Psoas muscle (tissue), 8 donors: ENCODE measurements at regions of chr3 and their contacts with region 1.

Region 1: GRCh38 chr3:172153335-172153861 is 114.0 kb downstream of the FNDC3B start:
- DNase-seq: peak; percentile 90 to 94
- ATAC-seq: peak; percentile 94 to 97 (median 96)
- H3K4me3 ChIP-seq: peak overlapping the region; percentile 45
- H3K27ac ChIP-seq: peak overlapping the region; percentile 91
- H3K4me1 ChIP-seq: peaks cover 78% of the 10 kb centered on the region
- H3K27me3 ChIP-seq: no peaks in the 10 kb centered on the region
- CTCF ChIP-seq: no peak

Region 2: DNA sequence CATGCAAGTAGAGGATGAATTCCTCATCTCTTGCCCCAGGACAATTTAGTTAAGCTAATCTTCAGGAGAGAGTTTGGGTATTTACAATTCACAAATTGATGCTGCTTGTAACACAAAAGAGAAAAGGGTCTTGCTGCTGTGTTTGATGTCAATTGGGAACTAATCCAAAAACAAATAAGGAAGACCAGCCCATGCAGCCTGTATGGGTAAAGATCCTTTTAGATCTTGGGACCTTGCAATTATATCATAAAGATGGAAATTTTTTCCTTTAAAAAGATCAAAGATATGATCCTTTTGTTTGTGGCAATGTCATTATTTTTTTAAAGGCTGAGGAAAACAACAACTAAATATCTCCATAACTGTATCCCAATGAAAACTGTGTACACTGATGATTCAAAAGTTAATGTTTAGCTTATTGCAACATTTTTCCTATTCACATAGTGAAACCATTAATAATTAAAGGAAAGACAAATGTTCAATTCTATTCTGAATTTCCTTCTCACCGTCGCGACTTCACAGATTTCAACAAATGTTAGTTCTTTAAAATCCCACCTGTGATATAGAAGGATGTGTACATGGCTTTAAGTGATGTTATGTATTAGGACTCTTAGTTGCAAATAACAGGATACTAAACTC is 270.0 kb before region 1 on chr3:
- intact Hi-C with region 1: no loop called
- DNase-seq: no peak
- ATAC-seq: no peak
- H3K4me3 ChIP-seq: no peak overlapping the region
- H3K27ac ChIP-seq: no peak overlapping the region
- H3K4me1 ChIP-seq: no peaks in the 10 kb centered on the region
- H3K27me3 ChIP-seq: no peaks in the 10 kb centered on the region
- CTCF ChIP-seq: no peak

Region 3: DNA sequence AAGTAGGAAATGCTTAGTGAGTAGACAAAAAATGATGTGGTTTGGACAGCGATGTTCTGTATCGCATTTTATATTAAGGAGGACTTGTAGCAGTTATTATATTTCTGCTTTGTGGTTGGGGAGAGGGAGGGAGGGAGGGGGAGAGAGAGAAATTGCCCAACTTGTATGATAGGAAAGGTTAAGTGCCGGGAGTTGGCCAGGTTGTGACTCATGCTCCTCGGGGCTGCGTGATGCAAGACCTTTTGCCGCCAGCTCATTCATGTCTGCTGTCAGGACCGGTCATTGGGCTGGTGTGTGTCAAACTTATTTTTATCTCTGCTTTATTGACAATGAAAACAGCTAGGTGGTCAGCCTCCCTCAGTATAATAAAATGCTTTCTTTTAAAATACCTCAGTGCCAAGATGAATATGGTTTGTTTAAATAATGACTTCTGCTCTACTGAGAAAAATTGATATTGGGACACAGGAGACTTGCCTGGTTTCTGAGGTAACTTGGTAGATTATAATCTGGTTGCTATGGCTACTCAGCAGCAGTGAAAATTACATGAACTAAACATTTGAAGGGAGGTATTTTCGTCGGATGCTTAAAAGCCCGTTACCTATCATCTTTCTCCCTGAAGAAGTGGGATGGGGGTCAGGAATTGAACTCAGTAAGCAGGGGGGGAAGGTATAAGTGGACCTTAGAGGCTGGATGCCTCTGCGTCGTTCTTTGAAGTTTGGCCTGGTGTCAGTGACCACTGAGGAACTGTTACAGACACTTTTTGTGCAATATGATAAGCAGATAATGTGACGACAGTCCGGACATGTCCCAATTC is 23.3 kb before region 1 on chr3:
- intact Hi-C with region 1: loop called in 1 of 2 experiments (anchors 2 kb)
- DNase-seq: peak; percentile 94 to 96
- ATAC-seq: peak; percentile 87 to 93 (median 89)
- H3K4me3 ChIP-seq: peak overlapping the region; percentile 33
- H3K27ac ChIP-seq: peak overlapping the region; percentile 95
- H3K4me1 ChIP-seq: peaks cover 91% of the 10 kb centered on the region
- H3K27me3 ChIP-seq: no peaks in the 10 kb centered on the region
- CTCF ChIP-seq: no peak

Region 4: DNA sequence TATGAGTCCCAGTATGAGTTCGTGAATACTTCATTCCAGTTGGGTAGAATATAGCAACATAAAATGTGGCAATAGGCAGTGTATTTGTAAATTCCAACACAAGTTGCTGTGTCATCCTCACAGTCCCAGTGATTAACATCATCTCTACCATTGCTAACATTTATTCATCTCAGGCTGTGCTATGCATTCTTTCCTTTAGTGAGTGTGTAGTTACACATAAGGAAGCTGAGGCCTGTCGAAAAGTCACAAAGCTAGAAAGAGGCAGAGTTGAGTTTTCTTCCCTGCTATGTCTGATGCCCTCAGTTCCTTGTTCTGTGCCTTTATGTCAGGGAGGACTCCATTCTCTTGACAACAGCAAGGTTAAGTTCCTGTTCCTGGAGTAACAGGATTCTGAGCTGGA is 17.6 kb before region 1 on chr3:
- intact Hi-C with region 1: loop called in 1 of 2 experiments (anchors 2 kb)
- DNase-seq: no peak
- ATAC-seq: no peak
- H3K4me3 ChIP-seq: no peak overlapping the region
- H3K27ac ChIP-seq: peak overlapping the region; percentile 79
- H3K4me1 ChIP-seq: peaks cover 87% of the 10 kb centered on the region
- H3K27me3 ChIP-seq: no peaks in the 10 kb centered on the region
- CTCF ChIP-seq: no peak

Region 5: DNA sequence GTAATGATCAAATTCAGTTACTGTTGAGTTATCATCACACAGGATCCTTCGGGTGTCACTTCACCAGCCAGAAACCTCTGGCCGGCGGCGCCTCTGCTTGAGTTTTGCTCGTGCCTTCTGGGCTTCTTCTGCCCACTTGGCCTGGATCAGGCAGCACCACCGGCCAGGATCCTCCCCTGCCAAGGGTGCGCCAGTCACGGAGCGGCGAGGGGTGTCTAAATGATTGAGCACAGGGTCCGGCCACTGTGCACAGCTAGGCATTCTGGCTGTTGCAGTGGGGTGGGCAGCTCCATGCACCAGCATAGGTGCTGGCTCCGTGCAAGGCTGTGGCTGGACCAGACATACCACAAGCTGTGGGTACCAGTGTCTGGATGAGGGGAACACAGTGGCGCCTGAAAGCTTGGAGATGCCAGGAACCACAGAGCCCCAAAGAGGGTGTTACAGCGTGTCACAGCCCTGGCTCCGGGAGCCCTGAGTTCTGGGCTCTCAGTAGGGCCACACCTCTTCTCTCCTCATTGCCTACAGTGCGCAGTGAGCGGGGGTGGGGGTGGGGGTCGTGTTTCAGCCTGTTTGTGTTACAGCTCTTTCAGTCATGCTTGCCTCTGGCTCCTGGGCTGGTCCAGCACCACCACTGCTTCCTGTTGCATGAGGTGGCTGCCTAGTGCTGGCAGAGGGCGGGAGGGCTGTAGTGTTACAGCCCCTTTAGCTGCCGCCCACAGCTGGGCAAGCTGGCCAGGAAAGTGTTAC is 55.4 kb after region 1 on chr3:
- intact Hi-C with region 1: loop called (anchors 5 kb)
- DNase-seq: peak; percentile 20 to 50
- ATAC-seq: peak; percentile 43 to 57 (median 52)
- H3K4me3 ChIP-seq: no peak overlapping the region
- H3K27ac ChIP-seq: peak overlapping the region; percentile 70
- H3K4me1 ChIP-seq: peaks cover 66% of the 10 kb centered on the region
- H3K27me3 ChIP-seq: no peaks in the 10 kb centered on the region
- CTCF ChIP-seq: no peak